Cardiac septum (tissue), 1 donor: ENCODE measurements at regions of chr15 and their contacts with region 1.

Region 1: DNA sequence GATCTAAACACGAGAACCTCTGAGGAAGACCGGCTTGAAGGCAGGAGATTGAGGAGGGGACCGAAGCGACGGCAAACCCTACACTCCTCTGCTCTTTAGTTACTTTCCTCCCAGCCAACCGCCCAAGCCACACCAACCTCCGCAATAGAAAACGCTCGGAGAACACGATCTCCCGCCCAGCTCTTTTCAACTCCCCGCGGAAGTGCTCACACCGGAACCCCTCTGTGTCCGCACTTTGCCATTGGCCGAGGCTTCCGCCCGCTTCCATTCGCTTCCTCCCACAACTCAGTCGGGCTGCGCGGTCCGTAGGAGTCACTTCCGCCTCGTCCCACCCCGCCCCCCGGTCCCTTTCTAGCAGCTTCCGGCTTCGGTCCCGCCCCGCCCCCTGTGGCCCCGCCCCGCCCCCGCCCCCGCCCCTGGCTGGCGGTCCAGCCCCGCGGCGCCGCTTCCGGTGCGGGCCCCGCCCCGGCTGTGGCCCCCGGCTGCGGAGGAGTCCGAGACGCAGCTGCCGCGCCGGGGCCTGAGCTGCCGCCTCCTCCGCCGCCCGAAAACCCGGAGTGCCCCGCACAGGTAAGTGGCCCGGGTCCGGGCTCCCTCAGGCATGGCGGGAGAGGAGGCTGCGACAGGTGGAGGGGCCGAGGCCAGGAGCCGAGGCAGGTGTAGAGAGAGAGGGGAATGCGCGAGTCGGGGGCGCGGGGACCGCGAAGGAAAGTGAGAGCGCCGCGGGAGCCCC is at the start of gene ARID3B:
- DNase-seq: peak; percentile 99
- total RNA-seq, gene ARID3B: 2.7 TPM

Region 2: DNA sequence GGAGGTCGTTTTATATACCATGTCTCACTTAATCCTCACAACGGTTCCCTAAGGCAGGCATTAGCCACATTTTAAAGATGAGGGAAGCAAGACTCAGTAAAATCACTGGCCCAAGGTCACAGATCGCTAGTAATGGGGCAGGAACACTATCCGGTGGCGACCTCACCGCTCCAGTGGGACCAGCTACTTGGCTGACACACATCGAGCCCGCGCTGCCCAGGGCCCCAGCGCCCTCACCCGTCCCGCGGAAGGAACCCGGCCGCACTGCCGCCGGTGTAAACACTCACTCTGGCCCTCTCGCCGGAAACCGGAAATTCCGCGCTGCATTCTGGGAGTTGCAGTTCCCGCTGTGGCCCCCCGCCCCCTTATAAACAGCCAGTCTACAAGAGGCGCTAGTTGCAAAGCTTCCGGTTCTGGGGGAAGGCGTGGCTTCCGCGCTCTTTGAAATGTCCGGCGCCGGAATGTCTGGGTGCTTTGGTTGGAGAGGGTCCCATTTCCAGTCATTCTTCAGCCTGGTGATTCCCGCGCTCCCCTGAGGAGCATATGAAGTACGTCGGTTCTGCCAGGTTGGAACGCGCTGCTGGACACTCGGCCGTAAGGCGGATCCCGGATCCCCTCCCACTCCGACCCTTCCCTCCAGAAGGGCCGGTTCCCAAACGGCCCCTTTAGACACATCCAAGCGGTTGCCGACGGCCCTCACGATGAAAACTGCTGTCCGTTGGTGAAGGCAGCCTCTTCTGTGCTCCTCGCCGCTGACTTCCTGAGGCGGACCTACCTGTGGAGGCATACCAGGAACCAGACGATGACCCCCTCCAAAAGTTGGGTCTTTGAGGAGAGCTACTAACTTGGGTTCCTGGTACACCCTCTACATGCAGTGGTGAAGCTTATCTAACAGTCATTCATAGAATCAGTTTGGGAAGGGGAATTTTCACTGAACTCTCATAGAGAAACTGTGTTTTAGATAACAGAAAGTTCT is 79.8 kb before region 1 on chr15 and contains the start of gene UBL7:
- intact Hi-C with region 1: loop called (anchors 5 kb)
- DNase-seq: peak; percentile 99
- total RNA-seq, gene UBL7: 48.3 TPM

Region 3: GRCh38 chr15:74615508-74616365 is 74.8 kb after region 1 on chr15 and contains the start of gene CLK3:
- intact Hi-C with region 1: loop called (anchors 2 kb)
- DNase-seq: peak; percentile 97
- total RNA-seq, gene CLK3: 53.1 TPM